ENCODE measurements at regions of chr7 and their contacts with region 1.

Region 1: DNA sequence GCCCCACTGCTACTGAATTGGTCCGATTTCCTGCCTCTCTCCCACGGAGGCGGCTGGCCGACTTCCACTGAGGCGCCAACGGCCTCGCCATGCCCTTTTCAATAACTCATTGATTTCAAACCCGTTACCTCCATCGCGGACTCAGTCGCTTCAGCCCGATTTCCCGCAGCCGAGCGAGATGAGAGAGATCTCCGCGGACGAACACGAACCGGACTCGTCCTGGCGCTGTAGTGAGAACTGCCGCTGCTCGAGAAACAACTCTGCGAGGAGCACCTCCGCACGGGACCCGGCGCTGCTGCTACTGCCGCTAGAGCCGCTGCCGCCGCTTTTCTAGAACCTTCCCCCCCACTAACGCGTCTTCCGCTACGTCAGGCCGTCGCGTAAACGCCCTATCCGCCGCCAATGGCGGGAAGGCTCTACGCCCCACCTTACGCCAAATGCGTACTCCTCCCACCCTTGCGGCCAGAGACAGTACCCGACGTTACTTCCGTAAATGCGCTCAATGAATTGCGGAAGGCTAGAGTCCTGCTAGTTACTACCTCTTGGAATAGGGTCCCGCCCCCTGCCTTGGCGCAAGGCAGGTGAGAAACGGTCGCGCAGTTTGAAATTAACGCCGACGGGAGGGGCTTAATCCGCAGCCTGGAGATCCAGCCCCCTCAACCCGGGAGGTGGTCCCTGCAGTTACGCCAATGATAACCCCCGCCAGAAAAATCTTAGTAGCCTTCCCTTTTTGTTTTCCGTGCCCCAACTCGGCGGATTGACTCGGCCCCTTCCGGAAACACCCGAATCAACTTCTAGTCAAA is at the start of gene HNRNPA2B1:
- DNase-seq: peak; percentile 97
- H3K4me3 Mint-ChIP-seq: peak within 1 kb of the TSS; percentile 100
- H3K27ac Mint-ChIP-seq: peak within 1 kb of the TSS; percentile 100
- H3K4me1 Mint-ChIP-seq: peaks cover 47% of the 10 kb centered on the region
- H3K27me3 Mint-ChIP-seq: no peaks in the 10 kb centered on the region
- total RNA-seq, gene HNRNPA2B1: 821 and 823 TPM in 2 replicates

Region 2: DNA sequence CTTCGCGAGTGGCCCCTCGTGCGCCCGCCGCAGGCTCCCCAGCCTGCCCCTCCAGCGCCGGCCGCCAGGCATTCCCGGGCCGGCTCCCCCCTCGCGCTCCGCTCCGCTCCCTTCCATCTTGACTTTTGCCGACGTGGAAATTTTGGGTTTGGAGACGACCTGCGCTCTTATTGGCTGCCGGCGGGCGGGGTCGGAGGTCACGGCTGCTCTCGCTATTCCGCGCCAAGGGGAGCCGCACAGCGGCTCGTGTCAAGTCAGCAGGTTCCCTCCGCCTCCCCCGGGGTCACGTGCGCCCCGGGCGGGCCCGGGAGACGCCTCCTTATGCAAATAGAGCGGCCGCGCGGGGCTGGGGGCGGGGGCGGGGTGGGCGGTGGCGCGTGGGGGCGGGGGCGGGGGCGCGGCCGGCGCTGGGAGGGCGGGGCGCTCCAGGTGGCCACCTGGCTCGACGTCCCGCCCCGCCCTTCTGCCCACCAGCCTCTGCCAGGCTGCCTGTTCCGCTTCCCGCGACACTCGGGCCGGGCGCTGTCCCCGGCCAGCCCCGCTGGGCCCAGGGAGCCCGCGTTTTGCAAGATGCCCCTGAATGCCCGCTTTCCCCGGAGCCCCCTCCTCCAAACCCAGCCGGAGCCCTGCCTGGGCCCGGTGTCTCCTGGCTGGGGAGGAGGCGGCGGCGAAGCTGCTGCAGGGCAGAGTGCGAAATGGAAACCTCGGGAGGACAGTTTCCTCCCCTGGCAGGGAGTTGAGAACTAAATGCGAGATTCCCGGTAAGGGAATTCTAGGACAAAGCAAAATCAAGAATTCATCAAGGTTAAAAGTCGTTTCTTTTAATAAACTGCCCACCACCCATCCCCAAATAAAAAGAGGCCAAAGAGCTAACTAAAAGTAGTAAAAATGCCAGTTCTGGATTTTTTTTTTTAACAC is 249.4 kb before region 1 on chr7:
- intact Hi-C with region 1: loop called (anchors 5 kb)
- DNase-seq: peak; percentile 87
- H3K4me3 Mint-ChIP-seq: peak overlapping the region; percentile 91
- H3K27ac Mint-ChIP-seq: peak overlapping the region; percentile 74
- H3K4me1 Mint-ChIP-seq: peaks cover 17% of the 10 kb centered on the region
- H3K27me3 Mint-ChIP-seq: peaks cover 5% of the 10 kb centered on the region

Region 3: GRCh38 chr7:26187380-26188205 is 13.1 kb before region 1 on chr7:
- intact Hi-C with region 1: loop called (anchors 1 kb)
- DNase-seq: no peak
- H3K4me3 Mint-ChIP-seq: no peak overlapping the region
- H3K27ac Mint-ChIP-seq: peak overlapping the region; percentile 76
- H3K4me1 Mint-ChIP-seq: peaks cover 78% of the 10 kb centered on the region
- H3K27me3 Mint-ChIP-seq: no peaks in the 10 kb centered on the region

Region 4: GRCh38 chr7:26278770-26279169 is 78.1 kb after region 1 on chr7:
- intact Hi-C with region 1: loop called (anchors 2 kb)
- DNase-seq: no peak
- H3K4me3 Mint-ChIP-seq: peak overlapping the region; percentile 47
- H3K27ac Mint-ChIP-seq: no peak overlapping the region
- H3K4me1 Mint-ChIP-seq: peaks cover 22% of the 10 kb centered on the region
- H3K27me3 Mint-ChIP-seq: peaks cover 3% of the 10 kb centered on the region

Region 5: DNA sequence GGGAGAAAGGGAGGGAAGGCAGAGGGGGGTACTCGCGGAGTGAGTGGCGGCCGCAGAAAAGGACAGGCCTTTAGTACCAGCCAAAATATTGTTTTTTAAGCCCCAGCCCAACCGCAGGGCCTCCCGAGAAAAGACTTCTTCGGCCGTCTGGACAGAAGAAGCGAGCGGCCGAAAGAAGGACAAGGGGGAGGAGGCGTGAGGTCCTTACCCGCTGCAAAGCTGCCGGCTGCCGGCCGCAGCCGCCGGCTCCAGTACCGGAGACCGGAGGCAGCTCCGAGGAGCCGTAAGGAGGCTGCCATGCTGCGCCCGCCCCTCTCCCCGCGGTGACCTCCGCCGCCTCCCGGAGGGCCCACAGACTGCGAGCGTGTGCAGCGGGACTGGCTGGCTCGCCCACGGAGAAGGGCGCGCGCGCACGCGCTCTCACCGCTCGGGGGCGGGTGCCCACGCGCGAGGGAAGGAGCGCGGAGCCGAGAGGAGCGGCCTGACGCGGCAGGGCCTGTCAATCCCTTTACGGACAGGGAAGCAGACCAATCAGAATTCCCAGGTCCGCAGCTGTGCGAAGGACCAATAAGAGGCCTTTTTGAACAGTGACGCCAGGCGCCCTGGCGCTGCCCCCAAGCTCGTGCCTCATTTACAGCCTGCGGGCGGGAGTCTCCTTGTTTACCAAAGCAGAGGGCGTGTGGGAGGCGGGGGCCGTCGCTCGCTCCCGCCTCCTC is 1462.0 kb after region 1 on chr7 and contains the start of gene HIBADH:
- intact Hi-C with region 1: loop called (anchors 2 kb)
- DNase-seq: peak; percentile 96
- H3K4me3 Mint-ChIP-seq: peak within 1 kb of the TSS; percentile 86
- H3K27ac Mint-ChIP-seq: peak within 1 kb of the TSS; percentile 81
- H3K4me1 Mint-ChIP-seq: peaks cover 30% of the 10 kb centered on the region
- H3K27me3 Mint-ChIP-seq: no peaks in the 10 kb centered on the region
- total RNA-seq, gene HIBADH: 21.0 and 21.2 TPM in 2 replicates